IMR-90 (cell line): ENCODE measurements at regions of chr5 and their contacts with region 1.

Region 1: DNA sequence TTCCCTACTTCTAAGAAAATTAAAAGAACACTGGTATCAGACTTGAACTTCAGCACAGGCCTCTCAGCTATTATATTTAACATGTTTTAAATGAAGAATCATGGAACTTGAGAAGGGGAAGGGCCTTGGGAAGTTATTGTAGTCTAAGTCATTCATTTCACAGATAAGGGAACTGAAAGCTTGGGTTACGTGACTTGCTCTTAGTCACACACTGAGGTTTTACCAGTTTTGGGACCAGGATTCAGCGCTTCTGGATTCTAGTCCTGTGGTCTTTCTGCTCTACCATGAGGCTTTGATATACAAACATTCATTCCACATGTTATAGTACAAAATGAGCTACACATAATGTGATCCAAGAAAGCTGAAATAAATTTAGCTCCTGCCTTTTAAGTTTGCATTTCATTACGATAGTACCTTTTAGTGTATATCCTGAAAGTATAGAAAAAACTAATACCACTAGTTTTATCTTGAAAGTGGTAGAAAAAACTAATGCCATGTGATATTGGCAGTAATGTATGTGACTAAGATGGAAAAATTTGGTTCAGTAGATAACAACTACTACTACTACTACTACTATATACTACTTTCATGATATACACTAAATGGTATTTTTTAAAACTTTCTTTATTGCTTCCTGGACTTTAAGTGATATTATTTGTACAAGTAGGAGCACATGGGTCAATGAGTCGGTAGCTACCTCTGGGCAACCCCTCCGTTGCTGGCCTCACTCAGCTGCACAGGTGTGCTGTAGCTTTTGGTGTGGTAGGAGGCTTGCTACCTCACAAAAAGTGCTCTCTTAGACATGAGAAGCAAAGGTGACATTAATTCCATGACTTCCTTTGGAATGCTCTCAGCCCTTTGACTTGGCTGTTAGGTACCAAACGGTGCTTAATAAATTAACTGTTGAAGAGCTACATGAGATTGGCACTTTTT is 40.7 kb downstream of the F2RL2 start:
- DNase-seq: peak; percentile 77
- ATAC-seq: peak; percentile 61
- H3K4me3 ChIP-seq: no peak overlapping the region
- H3K27ac ChIP-seq: no peak overlapping the region
- H3K4me1 ChIP-seq: peaks cover 2% of the 10 kb centered on the region; the same call in 1 of the 2 replicates
- H3K27me3 ChIP-seq: peaks cover 2% of the 10 kb centered on the region; the same call in 1 of the 2 replicates
- CTCF ChIP-seq: no peak
- POLR2A ChIP-seq: no peak
- RAD21 ChIP-seq: no peak

Region 2: DNA sequence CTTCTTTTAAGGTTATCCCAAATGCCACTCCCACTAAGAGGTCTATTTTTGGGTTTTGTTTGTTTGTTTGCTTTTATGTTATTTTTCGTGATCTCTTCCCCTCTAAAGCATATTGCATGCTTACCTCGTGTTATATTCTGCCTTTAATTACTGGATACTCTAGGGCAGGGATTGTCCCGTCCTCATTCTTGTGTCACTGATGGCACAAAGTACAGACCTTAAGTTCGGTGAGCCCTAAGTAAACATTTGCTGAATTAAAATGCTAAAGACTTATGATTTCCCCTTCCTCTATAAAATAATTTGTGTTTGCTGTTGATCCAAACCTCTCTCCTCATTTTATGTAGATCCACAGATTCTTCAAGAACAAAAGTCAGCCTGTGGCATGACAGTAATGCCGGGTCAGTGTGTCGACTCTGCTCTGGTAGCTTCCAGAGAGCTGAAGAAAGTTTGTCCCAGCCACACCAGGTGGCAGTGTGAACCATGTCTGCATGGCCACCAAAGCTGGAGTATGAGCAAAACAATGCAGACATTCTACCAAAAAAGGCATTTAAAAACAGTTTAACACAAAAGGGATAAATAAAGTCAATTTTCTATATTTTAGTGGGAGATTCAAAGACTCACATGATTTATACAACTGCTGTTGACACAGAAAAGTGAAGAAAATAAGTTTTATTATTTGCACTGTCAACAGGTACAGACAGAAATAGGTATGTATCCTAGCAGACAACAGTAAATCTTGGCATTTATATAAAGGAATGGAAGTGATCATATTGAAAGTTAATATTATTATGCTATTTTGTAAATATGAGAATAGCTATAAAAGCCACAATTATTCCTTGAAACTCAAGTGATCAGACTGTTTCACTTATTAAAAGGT is 847.3 kb before region 1 on chr5:
- CTCF ChIA-PET with region 1: no interaction called
- POLR2A ChIA-PET with region 1: no interaction called
- dilution Hi-C with region 1: no loop called
- in situ Hi-C with region 1: no loop called
- intact Hi-C with region 1: loop called (anchors 5 kb)
- DNase-seq: peak; percentile 4
- ATAC-seq: no peak
- H3K4me3 ChIP-seq: no peak overlapping the region
- H3K27ac ChIP-seq: no peak overlapping the region
- H3K4me1 ChIP-seq: no peaks in the 10 kb centered on the region
- H3K27me3 ChIP-seq: no peaks in the 10 kb centered on the region; the same call in 1 of the 2 replicates
- CTCF ChIP-seq: peak; percentile 18; the same call in 1 of the 2 replicates
- POLR2A ChIP-seq: no peak
- RAD21 ChIP-seq: peak; percentile 29; the same call in 1 of the 2 replicates

Region 3: DNA sequence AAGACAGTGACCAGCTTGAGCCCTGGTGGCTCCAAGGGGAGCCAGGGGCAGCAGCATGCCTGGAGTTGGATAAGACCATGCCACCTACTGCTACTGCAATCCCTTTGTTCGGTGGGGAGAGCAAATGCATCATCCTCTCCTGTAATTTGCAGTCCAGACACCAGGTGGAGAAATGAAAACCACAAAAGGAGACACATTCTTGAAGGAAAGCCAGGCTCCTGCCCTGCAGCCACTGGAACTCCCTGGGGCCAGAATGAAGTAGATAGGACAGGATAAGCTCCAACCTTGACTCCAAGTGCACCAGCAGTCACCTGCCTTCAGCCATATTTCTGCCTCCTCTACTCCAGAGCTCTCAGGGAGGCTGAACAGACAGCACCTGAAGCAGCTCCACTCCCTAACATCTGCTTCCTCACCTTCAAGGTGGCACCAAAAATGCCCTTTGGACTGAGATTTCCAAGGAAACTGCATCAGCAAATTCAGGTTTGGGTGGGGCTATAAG is 244.5 kb before region 1 on chr5:
- CTCF ChIA-PET with region 1: no interaction called
- POLR2A ChIA-PET with region 1: no interaction called
- dilution Hi-C with region 1: no loop called
- in situ Hi-C with region 1: no loop called
- intact Hi-C with region 1: loop called (anchors 2 kb)
- DNase-seq: peak; percentile 47
- ATAC-seq: peak; percentile 29; the same call in 1 of the 2 replicates
- H3K4me3 ChIP-seq: no peak overlapping the region
- H3K27ac ChIP-seq: no peak overlapping the region
- H3K4me1 ChIP-seq: no peaks in the 10 kb centered on the region
- H3K27me3 ChIP-seq: peaks cover 2% of the 10 kb centered on the region; the same call in 1 of the 2 replicates
- CTCF ChIP-seq: peak; percentile 43
- POLR2A ChIP-seq: no peak
- RAD21 ChIP-seq: no peak

Region 4: DNA sequence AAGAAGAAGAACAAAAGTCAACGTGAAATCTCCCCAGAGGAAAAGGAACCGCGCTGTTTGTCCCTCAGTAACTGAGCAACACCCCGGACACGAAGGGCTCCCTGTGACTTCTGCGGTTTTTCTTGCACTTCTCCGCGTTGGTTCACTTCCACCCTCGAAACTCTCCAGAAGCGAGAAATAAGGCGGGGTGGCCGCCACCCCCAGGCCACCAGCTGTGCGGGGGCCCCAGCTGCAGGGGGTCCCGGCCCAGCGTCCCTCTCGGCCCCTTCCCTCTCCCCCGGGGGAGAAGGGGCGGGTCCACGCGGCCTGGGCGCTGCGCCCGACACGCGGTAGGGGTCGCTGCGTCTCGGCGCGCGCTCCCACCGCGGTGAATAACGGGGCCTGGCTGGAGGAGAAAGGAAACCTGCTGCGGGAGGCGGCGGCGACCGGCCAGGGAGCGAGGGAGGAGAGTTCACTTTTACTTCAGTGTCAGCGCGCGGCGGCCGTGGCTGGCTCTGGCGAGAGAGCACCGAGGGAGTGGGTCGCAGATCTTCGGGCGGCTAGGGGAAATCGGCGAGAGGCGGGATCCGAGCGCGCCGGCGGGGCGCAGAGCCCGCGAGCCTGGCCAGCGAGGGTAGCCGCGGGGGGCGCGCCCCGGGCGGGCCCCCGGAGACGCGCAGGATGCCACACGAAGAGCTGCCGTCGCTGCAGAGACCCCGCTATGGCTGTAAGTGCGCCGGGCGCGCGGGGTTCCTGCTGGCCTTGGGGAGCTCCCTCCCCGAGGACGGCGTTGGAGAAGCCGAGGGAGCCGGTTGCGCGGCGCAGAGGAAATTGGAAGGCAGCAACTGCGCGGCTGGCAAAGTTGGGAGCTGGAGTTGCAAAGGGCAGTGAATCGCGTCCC is 179.4 kb before region 1 on chr5 and contains the start of gene IQGAP2:
- CTCF ChIA-PET with region 1: no interaction called
- POLR2A ChIA-PET with region 1: no interaction called
- dilution Hi-C with region 1: no loop called
- in situ Hi-C with region 1: no loop called
- intact Hi-C with region 1: loop called (anchors 5 kb)
- DNase-seq: peak; percentile 34
- ATAC-seq: peak; percentile 85
- H3K4me3 ChIP-seq: peak within 1 kb of the TSS; percentile 51
- H3K27ac ChIP-seq: no peak within 1 kb of the TSS
- H3K4me1 ChIP-seq: no peaks in the 10 kb centered on the region
- H3K27me3 ChIP-seq: peaks cover 45% of the 10 kb centered on the region
- CTCF ChIP-seq: peak; percentile 53
- POLR2A ChIP-seq: no peak
- RAD21 ChIP-seq: peak; percentile 42
- total RNA-seq, gene IQGAP2: 0.28 and 0.36 TPM in 2 replicates